CD8-positive, alpha-beta T cell (primary cell): ENCODE measurements at regions of chr20 and their contacts with region 1.

Region 1: GRCh38 chr20:15265581-15266309 is 928.3 kb upstream of the FLRT3 start:
- DNase-seq: no peak
- ATAC-seq: no peak
- H3K4me3 ChIP-seq: no peak overlapping the region
- H3K4me3 Mint-ChIP-seq: no peak overlapping the region
- H3K27ac ChIP-seq: no peak overlapping the region
- H3K27ac Mint-ChIP-seq: no peak overlapping the region
- H3K4me1 ChIP-seq: no peaks in the 10 kb centered on the region
- H3K4me1 Mint-ChIP-seq: no peaks in the 10 kb centered on the region
- H3K27me3 ChIP-seq: no peaks in the 10 kb centered on the region
- H3K27me3 Mint-ChIP-seq: no peaks in the 10 kb centered on the region
- CTCF ChIP-seq: no peak

Region 2: GRCh38 chr20:15200147-15200565 is 65.6 kb before region 1 on chr20:
- CTCF ChIA-PET with region 1: no interaction called
- POLR2A ChIA-PET with region 1: no interaction called
- intact Hi-C with region 1: loop called in 1 of 2 experiments (anchors 10 kb)
- DNase-seq: no peak
- ATAC-seq: no peak
- H3K4me3 ChIP-seq: no peak overlapping the region
- H3K4me3 Mint-ChIP-seq: no peak overlapping the region
- H3K27ac ChIP-seq: no peak overlapping the region
- H3K27ac Mint-ChIP-seq: no peak overlapping the region
- H3K4me1 ChIP-seq: no peaks in the 10 kb centered on the region
- H3K4me1 Mint-ChIP-seq: no peaks in the 10 kb centered on the region
- H3K27me3 ChIP-seq: no peaks in the 10 kb centered on the region
- H3K27me3 Mint-ChIP-seq: no peaks in the 10 kb centered on the region
- CTCF ChIP-seq: no peak